Activated CD8-positive, alpha-beta T cell treated with anti-CD3 and anti-CD28 coated beads for 36 hours (primary cell): ENCODE measurements at regions of chr6 and their contacts with region 1.

Region 1: GRCh38 chr6:4018172-4018905 is 60.6 kb downstream of the FAM217A start:
- DNase-seq: peak; percentile 99
- ATAC-seq: peak; percentile 69
- H3K4me3 Mint-ChIP-seq: peak overlapping the region; percentile 86
- H3K27ac Mint-ChIP-seq: peak overlapping the region; percentile 97
- H3K4me1 Mint-ChIP-seq: peaks cover 41% of the 10 kb centered on the region
- H3K27me3 Mint-ChIP-seq: no peaks in the 10 kb centered on the region
- CTCF ChIP-seq: no peak

Region 2: GRCh38 chr6:4030669-4031068 is 12.3 kb after region 1 on chr6:
- CTCF ChIA-PET with region 1: interaction called, 4 read pairs
- POLR2A ChIA-PET with region 1: interaction called, 21 read pairs
- intact Hi-C with region 1: no loop called
- DNase-seq: no peak
- ATAC-seq: no peak
- H3K4me3 Mint-ChIP-seq: no peak overlapping the region
- H3K27ac Mint-ChIP-seq: peak overlapping the region; percentile 37
- H3K4me1 Mint-ChIP-seq: peaks cover 73% of the 10 kb centered on the region
- H3K27me3 Mint-ChIP-seq: no peaks in the 10 kb centered on the region
- CTCF ChIP-seq: no peak

Region 3: GRCh38 chr6:4055420-4056041 is 37.2 kb after region 1 on chr6:
- CTCF ChIA-PET with region 1: interaction called, 5 read pairs
- POLR2A ChIA-PET with region 1: interaction called, 19 read pairs
- intact Hi-C with region 1: loop called (anchors 5 kb)
- DNase-seq: no peak
- ATAC-seq: no peak
- H3K4me3 Mint-ChIP-seq: no peak overlapping the region
- H3K27ac Mint-ChIP-seq: no peak overlapping the region
- H3K4me1 Mint-ChIP-seq: peaks cover 31% of the 10 kb centered on the region
- H3K27me3 Mint-ChIP-seq: no peaks in the 10 kb centered on the region
- CTCF ChIP-seq: no peak

Region 4: GRCh38 chr6:4084444-4085331 is 66.3 kb after region 1 on chr6:
- CTCF ChIA-PET with region 1: no interaction called
- POLR2A ChIA-PET with region 1: no interaction called
- intact Hi-C with region 1: no loop called
- DNase-seq: no peak
- ATAC-seq: no peak
- H3K4me3 Mint-ChIP-seq: no peak overlapping the region
- H3K27ac Mint-ChIP-seq: no peak overlapping the region
- H3K4me1 Mint-ChIP-seq: no peaks in the 10 kb centered on the region
- H3K27me3 Mint-ChIP-seq: peaks cover under 1% of the 10 kb centered on the region
- CTCF ChIP-seq: no peak